ENCODE measurements at regions of chr3 and their contacts with region 1.

Region 1: GRCh38 chr3:187445356-187445755 is 77.2 kb downstream of the RTP4 start:
- DNase-seq: no peak
- ATAC-seq: no peak
- H3K4me3 ChIP-seq: no peak overlapping the region
- H3K27ac ChIP-seq: no peak overlapping the region
- H3K4me1 ChIP-seq: no peaks in the 10 kb centered on the region
- H3K27me3 ChIP-seq: peaks cover 0 to 7% (median 0%) of the 10 kb centered on the region in 7 donors
- CTCF ChIP-seq: no peak

Region 2: DNA sequence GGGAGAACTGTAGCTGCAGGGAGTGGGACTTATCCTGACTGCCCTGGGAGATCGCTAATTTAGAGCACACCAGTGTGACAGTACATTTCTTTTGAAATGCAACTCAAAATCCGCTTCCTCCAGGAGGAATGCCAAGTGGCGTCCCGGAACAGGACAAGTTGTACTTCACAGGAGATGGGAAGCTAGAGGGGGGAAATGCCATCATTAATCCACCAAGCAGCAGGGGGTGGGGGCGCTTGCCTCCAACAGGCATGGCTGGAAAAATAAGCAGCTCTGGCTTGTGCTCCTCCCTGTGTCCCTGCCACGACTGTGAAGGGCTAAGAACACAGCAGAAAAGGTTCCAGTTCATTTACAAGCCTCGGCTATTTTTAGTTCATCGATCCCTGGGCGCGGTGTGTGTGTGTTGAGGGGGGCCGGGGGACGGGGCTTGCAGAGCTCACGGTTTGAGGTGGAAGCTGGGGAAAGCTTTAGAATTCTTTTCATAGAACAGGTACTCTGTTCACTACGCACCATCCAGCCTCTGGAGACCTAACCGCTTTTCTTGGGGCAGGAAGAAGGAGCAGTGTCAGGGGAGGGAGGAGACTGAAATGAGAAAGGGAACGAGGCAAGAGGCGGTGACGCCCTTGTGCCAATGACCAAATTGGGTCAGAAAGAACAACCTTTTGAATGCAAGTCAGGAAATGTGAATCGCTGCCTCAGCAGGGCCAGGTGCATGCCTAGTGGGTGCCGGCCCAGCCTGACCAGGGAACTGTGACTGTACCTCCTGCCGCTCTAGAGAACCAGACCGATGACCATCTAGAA is 1031.5 kb before region 1 on chr3:
- intact Hi-C with region 1: loop called in 1 of 10 experiments (anchors 5 kb)
- DNase-seq: peak; percentile 28 to 34
- ATAC-seq: peak; percentile 40 to 93 (median 78)
- H3K4me3 ChIP-seq: peak overlapping the region in 8 of 10 donors; percentile 18 to 43 (median 40)
- H3K27ac ChIP-seq: peak overlapping the region; percentile 44 to 85 (median 72)
- H3K4me1 ChIP-seq: peaks cover 4 to 22% (median 18%) of the 10 kb centered on the region in 9 donors
- H3K27me3 ChIP-seq: no peaks in the 10 kb centered on the region
- CTCF ChIP-seq: no peak

Region 3: GRCh38 chr3:188546835-188547670 is 1101.7 kb after region 1 on chr3:
- intact Hi-C with region 1: no loop called
- DNase-seq: no peak
- ATAC-seq: no peak
- H3K4me3 ChIP-seq: no peak overlapping the region
- H3K27ac ChIP-seq: no peak overlapping the region
- H3K4me1 ChIP-seq: peaks cover 0 to 13% (median 4%) of the 10 kb centered on the region in 9 donors
- H3K27me3 ChIP-seq: no peaks in the 10 kb centered on the region
- CTCF ChIP-seq: no peak